PC-3 (cell line): ENCODE measurements at regions of chr9 and their contacts with region 1.

Region 1: GRCh38 chr9:104093647-104094533 is at the start of gene SMC2:
- DNase-seq: peak; percentile 78
- ATAC-seq: peak; percentile 84
- H3K4me3 ChIP-seq: peak within 1 kb of the TSS; percentile 98
- H3K27ac ChIP-seq: peak within 1 kb of the TSS; percentile 87
- H3K4me1 ChIP-seq: peaks cover 30% of the 10 kb centered on the region
- H3K27me3 ChIP-seq: no peaks in the 10 kb centered on the region
- CTCF ChIP-seq: no peak
- total RNA-seq, gene SMC2: 19.2 and 20.7 TPM in 2 replicates

Region 2: DNA sequence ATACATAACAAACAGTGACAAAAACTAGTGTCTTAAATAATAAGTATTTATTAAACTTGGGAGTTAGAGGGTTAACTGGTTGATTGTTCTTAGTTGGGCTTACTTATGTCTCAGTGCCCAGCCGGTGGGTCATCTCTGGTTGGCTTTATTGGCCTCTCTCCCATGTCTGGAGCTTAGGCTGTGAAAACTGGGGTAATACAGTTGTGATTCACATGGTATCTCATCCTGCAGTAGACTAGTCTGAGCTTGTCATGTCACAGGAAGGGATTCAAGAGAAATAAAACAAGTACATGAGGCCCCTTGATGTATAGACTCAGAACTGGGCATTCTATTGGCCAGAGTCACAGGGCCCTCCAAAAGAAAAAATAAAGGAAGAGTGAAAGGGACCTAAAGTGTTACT is 466.2 kb before region 1 on chr9:
- CTCF ChIA-PET with region 1: no interaction called
- POLR2A ChIA-PET with region 1: no interaction called
- intact Hi-C with region 1: no loop called
- DNase-seq: no peak
- ATAC-seq: no peak
- H3K4me3 ChIP-seq: no peak overlapping the region
- H3K27ac ChIP-seq: no peak overlapping the region
- H3K4me1 ChIP-seq: no peaks in the 10 kb centered on the region
- H3K27me3 ChIP-seq: no peaks in the 10 kb centered on the region
- CTCF ChIP-seq: no peak

Region 3: GRCh38 chr9:103789686-103790085 is 304.2 kb before region 1 on chr9:
- CTCF ChIA-PET with region 1: no interaction called
- POLR2A ChIA-PET with region 1: interaction called, 4 read pairs
- intact Hi-C with region 1: loop called (anchors 10 kb)
- DNase-seq: peak; percentile 10
- ATAC-seq: peak; percentile 46
- H3K4me3 ChIP-seq: no peak overlapping the region
- H3K27ac ChIP-seq: no peak overlapping the region
- H3K4me1 ChIP-seq: no peaks in the 10 kb centered on the region
- H3K27me3 ChIP-seq: no peaks in the 10 kb centered on the region
- CTCF ChIP-seq: peak; percentile 52

Region 4: DNA sequence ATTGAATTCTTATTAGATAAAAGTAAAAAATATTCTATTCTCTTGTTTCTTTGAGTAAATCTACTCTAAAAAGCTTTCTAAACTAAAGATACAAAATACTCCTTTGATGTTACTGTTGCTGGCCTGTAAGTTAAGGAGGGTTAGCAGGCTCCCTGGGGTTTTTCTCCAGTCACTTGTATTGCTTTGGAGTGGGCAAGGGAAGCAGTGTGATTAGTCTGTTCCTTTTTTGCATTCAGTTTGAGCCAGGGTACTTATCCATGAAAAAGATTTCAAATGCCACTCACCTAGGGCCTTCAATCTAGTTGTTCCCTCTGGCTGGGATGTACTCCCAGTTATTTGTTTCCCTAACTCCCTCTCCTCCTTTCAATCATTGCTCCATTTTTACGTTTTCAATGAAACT is 255.9 kb before region 1 on chr9:
- CTCF ChIA-PET with region 1: no interaction called
- POLR2A ChIA-PET with region 1: no interaction called
- intact Hi-C with region 1: loop called (anchors 10 kb)
- DNase-seq: no peak
- ATAC-seq: no peak
- H3K4me3 ChIP-seq: no peak overlapping the region
- H3K27ac ChIP-seq: no peak overlapping the region
- H3K4me1 ChIP-seq: no peaks in the 10 kb centered on the region
- H3K27me3 ChIP-seq: no peaks in the 10 kb centered on the region
- CTCF ChIP-seq: no peak

Region 5: DNA sequence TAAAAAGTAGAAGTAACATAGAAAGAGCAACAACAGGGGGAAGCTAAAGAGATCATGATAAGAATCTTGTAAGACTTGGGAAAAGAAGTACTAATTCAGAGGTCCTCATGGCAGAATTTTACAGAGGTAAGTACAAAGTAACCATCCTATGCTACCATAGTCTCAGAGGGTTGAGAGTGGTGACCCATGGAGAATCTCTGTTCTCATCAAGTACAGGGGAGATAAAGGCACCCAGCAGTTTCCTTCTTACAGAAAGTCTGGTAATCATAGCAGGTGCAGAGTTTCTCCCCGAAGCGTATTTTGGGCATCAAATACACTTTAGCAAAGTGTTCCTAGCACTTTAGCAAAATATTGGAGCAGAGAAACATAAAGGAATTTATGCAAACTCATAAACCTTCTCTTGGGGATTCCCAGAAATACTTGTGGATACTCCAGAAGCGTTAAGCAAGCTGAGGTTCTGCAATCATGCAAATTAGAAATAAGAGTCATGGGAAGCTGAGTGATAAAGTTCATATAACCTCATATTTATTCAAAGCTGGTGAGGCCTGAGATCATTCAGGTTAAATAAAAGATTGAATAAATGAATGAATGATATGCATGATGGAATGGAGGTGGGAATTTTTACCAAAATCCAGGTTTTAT is 100.8 kb before region 1 on chr9:
- CTCF ChIA-PET with region 1: no interaction called
- POLR2A ChIA-PET with region 1: interaction called, 10 read pairs
- intact Hi-C with region 1: no loop called
- DNase-seq: no peak
- ATAC-seq: no peak
- H3K4me3 ChIP-seq: no peak overlapping the region
- H3K27ac ChIP-seq: no peak overlapping the region
- H3K4me1 ChIP-seq: no peaks in the 10 kb centered on the region
- H3K27me3 ChIP-seq: no peaks in the 10 kb centered on the region
- CTCF ChIP-seq: no peak

Region 6: GRCh38 chr9:104027295-104027694 is 66.6 kb before region 1 on chr9:
- CTCF ChIA-PET with region 1: no interaction called
- POLR2A ChIA-PET with region 1: no interaction called
- intact Hi-C with region 1: loop called (anchors 2 kb)
- DNase-seq: no peak
- ATAC-seq: no peak
- H3K4me3 ChIP-seq: no peak overlapping the region
- H3K27ac ChIP-seq: no peak overlapping the region
- H3K4me1 ChIP-seq: no peaks in the 10 kb centered on the region
- H3K27me3 ChIP-seq: no peaks in the 10 kb centered on the region
- CTCF ChIP-seq: no peak

Region 7: GRCh38 chr9:104068546-104068945 is 25.3 kb before region 1 on chr9:
- CTCF ChIA-PET with region 1: no interaction called
- POLR2A ChIA-PET with region 1: no interaction called
- intact Hi-C with region 1: loop called (anchors 2 kb)
- DNase-seq: peak; percentile 36
- ATAC-seq: peak; percentile 74
- H3K4me3 ChIP-seq: no peak overlapping the region
- H3K27ac ChIP-seq: no peak overlapping the region
- H3K4me1 ChIP-seq: no peaks in the 10 kb centered on the region
- H3K27me3 ChIP-seq: no peaks in the 10 kb centered on the region
- CTCF ChIP-seq: no peak

Region 8: GRCh38 chr9:104075801-104076753 is 17.8 kb before region 1 on chr9:
- CTCF ChIA-PET with region 1: no interaction called
- POLR2A ChIA-PET with region 1: interaction called, 6 read pairs
- intact Hi-C with region 1: loop called (anchors 1 kb)
- DNase-seq: peak; percentile 8
- ATAC-seq: peak; percentile 43
- H3K4me3 ChIP-seq: no peak overlapping the region
- H3K27ac ChIP-seq: no peak overlapping the region
- H3K4me1 ChIP-seq: peaks cover 9% of the 10 kb centered on the region; the same call in 1 of the 2 replicates
- H3K27me3 ChIP-seq: no peaks in the 10 kb centered on the region
- CTCF ChIP-seq: no peak